ENCODE measurements at regions of chr21 and their contacts with region 1.

Region 1: GRCh38 chr21:40466893-40467501 is 380.0 kb downstream of the DSCAM start:
- DNase-seq: no peak
- H3K4me3 ChIP-seq: no peak overlapping the region
- CTCF ChIP-seq: no peak
- POLR2A ChIP-seq: no peak

Region 2: DNA sequence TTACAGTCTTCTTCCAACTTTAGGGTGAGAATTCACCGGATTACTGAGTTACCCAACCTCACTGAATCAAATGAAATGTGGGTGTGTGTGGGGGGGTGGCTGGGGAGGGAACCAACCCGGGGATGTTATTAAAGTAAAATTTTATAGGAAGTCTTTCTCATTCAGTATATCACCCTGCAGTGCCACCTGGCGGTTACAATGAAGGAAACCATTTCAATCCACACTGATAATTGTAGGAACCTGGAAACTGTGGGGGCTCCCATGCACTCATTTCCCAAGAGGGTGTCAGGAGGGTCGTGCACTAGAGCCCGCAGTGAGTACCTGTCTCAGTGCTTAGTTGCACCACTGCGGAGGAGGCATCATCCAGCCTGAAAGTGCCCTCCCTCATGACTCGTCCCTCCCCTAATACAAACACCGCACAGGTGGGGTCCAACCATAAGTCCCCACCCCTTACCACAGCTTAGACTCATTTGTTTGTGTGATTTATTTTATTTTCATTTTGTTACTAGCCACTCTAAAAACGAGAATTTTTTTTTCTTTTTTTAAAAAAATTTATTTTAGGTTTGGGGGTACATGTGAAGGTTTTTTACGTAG is 751.1 kb before region 1 on chr21:
- intact Hi-C with region 1: no loop called
- DNase-seq: peak; percentile 37 to 38
- H3K4me3 ChIP-seq: no peak overlapping the region
- CTCF ChIP-seq: no peak
- POLR2A ChIP-seq: no peak

Region 3: GRCh38 chr21:41071258-41072171 is 604.5 kb after region 1 on chr21:
- intact Hi-C with region 1: loop called (anchors 10 kb)
- DNase-seq: no peak
- H3K4me3 ChIP-seq: no peak overlapping the region
- CTCF ChIP-seq: no peak
- POLR2A ChIP-seq: no peak